Aorta (tissue), 5 donors: ENCODE measurements at regions of chr7 and their contacts with region 1.

Region 1: GRCh38 chr7:90629297-90629918 is 33.3 kb downstream of the CDK14 start:
- DNase-seq: no peak
- ATAC-seq: peak; percentile 73
- H3K4me3 ChIP-seq: no peak overlapping the region
- H3K27ac ChIP-seq: no peak overlapping the region
- H3K4me1 ChIP-seq: no peaks in the 10 kb centered on the region
- H3K27me3 ChIP-seq: no peaks in the 10 kb centered on the region

Region 2: GRCh38 chr7:89377219-89377618 is 1252.2 kb before region 1 on chr7:
- intact Hi-C with region 1: no loop called
- DNase-seq: no peak
- ATAC-seq: no peak
- H3K4me3 ChIP-seq: no peak overlapping the region
- H3K27ac ChIP-seq: no peak overlapping the region
- H3K4me1 ChIP-seq: no peaks in the 10 kb centered on the region
- H3K27me3 ChIP-seq: no peaks in the 10 kb centered on the region

Region 3: DNA sequence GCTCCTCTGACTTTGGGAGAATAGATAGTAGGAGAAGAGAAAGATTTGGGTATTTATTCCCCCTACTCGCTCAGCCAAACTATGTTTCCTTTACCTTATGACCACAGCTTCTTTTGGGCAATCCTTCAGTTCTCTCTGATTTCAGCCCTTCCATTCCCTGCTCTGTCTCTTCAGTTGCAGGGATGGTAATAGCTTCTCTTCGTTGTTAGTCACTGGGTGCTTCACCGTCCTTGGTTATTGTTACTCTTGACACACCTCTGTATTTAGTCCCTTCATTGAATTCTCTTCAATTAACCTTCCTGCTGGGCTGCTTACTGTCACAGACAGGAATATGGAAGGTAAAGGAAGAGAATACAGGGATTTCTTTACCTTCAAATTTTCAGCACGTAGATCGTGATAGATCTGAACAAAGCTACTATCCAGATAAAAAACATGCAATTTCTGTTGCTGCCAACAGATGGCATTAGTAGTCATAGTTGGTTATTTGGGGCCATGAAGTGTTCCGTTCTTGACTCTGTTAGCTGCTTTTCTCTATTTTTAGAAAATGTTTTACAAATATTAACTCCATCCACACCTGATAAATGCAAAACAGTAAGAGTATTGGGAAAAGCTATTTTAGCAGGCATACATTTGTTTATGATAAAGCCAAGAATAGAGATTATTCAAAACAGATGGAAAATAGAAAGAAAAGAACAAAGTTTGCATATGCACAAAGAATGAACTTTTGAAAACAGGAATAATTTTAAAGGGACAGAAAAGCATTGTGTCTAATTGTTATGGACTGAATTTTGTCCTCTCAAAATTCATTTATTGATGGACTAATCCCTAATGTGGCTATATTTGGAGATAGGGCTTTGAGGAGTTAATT is 174.0 kb before region 1 on chr7:
- intact Hi-C with region 1: loop called (anchors 2 to 10 kb)
- DNase-seq: no peak
- ATAC-seq: peak; percentile 84
- H3K4me3 ChIP-seq: peak overlapping the region in 1 of 2 donors; percentile 18
- H3K27ac ChIP-seq: no peak overlapping the region
- H3K4me1 ChIP-seq: no peaks in the 10 kb centered on the region
- H3K27me3 ChIP-seq: no peaks in the 10 kb centered on the region

Region 4: GRCh38 chr7:90552521-90552920 is 76.9 kb before region 1 on chr7:
- intact Hi-C with region 1: loop called (anchors 5 to 10 kb)
- DNase-seq: no peak
- ATAC-seq: no peak
- H3K4me3 ChIP-seq: no peak overlapping the region
- H3K27ac ChIP-seq: no peak overlapping the region
- H3K4me1 ChIP-seq: no peaks in the 10 kb centered on the region
- H3K27me3 ChIP-seq: no peaks in the 10 kb centered on the region

Region 5: DNA sequence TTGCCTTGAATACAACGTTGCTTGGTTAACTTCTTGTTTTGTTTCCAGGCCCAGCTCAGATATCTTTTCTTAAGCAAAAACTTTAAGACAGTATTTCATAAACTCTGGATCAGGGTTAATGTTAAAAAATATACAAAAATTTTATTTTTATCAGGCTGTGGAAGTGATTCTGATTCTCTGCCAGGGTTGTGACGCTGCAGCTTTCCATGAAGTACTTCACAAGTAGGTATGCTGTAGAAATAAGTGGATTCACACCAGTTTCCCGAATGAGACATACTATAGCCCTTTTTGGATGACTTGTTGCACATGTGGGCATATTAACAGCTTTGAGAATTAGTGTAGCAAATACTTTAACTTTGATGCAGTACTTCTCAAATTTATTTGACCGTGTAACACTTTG is 36.8 kb after region 1 on chr7:
- intact Hi-C with region 1: no loop called
- DNase-seq: no peak
- ATAC-seq: peak; percentile 22
- H3K4me3 ChIP-seq: no peak overlapping the region
- H3K27ac ChIP-seq: no peak overlapping the region
- H3K4me1 ChIP-seq: peaks cover 2 to 16% of the 10 kb centered on the region in 2 donors
- H3K27me3 ChIP-seq: no peaks in the 10 kb centered on the region